K562 (cell line): ENCODE measurements at regions of chr5 and their contacts with region 1.

Region 1: GRCh38 chr5:132662925-132663770 is 5.2 kb downstream of the IL13 start:
- DNase-seq: peak; percentile 63 to 71 (median 65)
- ATAC-seq: peak; percentile 58
- H3K4me3 ChIP-seq: no peak overlapping the region
- H3K27ac ChIP-seq: peak overlapping the region; percentile 81
- H3K4me1 ChIP-seq: peaks cover 63 to 81% of the 10 kb centered on the region in 2 experiments
- H3K27me3 ChIP-seq: no peaks in the 10 kb centered on the region
- CTCF ChIP-seq: no peak
- EP300 ChIP-seq: no peak
- POLR2A ChIP-seq: 0 out of 2 replicates have a peak, but pooled peaks have one; percentile 38
- RAD21 ChIP-seq: no peak

Region 2: DNA sequence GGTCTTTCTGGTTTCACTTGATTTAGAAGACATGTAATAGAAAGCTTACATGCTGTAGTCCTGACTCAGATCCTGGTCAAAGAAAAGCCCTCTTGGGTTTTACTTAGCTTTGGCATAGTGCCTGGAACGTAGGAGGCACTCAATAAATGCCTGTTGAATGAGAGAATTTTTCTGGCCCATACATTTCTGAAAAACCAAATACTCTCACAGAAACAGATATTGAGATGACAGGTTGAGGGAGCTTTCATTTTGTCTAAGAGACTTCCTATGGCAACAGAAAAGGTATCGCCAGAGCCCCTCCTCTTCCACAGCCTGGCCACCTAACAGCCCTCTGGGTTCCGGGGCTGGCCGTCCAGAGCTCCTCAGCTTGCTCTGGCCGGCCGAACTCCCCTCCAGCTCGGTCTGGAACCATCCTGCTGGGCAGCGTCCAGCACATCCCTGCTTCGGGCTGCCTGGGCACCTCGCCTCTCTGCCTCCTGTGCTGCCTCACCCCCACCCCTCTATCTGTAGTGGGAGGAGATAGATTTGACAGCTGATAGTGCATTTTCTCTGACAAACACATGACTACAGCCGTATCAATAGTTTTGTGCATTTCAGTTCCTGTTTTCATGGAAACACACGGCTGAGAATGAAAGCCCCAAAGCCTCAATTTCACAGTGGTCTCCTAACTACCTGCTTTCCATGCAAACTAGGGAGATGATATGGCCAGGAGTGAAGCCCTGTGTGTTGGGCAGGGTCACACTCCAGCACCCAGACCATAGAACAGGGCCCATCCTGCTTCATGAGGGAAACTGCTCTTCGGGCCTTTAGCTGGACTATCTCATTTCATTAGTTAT is 11.7 kb after region 1 on chr5:
- CTCF ChIA-PET with region 1: no interaction called
- POLR2A ChIA-PET with region 1: interaction called, 12 read pairs
- in situ Hi-C with region 1: no loop called
- intact Hi-C with region 1: no loop called
- DNase-seq: no peak
- ATAC-seq: peak; percentile 48
- H3K4me3 ChIP-seq: no peak overlapping the region
- H3K27ac ChIP-seq: no peak overlapping the region
- H3K4me1 ChIP-seq: peaks cover 20 to 38% of the 10 kb centered on the region in 2 experiments; a peak in 4 of 5 replicates
- H3K27me3 ChIP-seq: no peaks in the 10 kb centered on the region
- CTCF ChIP-seq: no peak
- EP300 ChIP-seq: no peak
- POLR2A ChIP-seq: no peak
- RAD21 ChIP-seq: no peak

Region 3: DNA sequence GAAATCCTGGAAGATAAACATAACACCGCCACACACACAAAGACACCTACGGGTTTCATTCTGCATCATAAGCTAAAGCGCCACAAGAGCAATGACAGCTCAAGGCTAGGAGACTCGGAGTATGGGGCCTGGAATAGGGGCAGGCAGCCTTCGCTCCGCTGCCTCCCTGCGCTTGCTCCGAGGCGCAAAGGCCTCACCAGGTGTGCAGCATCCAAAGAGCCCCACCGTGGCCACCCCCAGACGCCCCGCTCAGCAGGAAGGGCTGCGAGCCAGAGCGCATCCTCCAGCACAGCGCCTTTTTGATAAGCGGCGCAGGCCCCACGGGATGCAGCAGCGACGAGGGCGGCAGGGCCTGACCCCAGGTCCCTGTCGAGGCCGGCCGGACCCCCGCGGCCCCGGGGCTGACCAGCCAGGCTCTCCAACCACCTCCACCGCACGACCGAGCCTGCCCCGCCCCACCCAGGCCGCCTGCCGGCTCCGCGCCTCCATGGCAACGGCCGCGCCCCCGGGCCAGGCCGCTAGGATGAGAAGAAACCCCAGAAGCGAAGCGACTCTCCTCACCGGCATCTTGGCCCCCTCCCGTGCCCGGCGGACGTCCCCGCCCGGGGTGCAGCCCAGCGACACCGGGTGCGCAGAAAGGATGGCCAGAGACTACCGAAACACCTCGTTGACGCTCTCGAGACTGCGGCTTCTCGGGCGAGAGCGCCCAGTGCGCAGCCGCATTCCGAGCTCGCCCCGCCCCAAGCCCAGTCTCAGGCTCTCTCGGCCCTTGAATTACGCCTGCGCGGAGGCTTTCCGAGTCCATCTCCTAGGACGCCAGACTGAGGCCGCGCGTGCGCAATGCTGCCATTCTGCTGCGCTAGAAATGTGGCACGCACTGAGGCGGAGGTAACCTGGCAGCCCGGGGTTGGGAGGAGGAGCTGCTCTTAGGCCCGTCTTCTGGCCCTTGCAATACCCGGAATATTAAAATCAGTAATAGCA is 74.0 kb after region 1 on chr5 and contains the start of gene KIF3A:
- CTCF ChIA-PET with region 1: no interaction called
- POLR2A ChIA-PET with region 1: no interaction called
- in situ Hi-C with region 1: no loop called
- intact Hi-C with region 1: loop called (anchors 5 kb)
- DNase-seq: peak; percentile 98 to 100 (median 99)
- ATAC-seq: peak; percentile 99
- H3K4me3 ChIP-seq: peak within 1 kb of the TSS; percentile 84
- H3K27ac ChIP-seq: no peak within 1 kb of the TSS; the same call in 2 of the 3 replicates
- H3K4me1 ChIP-seq: peaks cover 10 to 16% of the 10 kb centered on the region in 2 experiments; a peak in 4 of 5 replicates
- H3K27me3 ChIP-seq: no peaks in the 10 kb centered on the region
- CTCF ChIP-seq: no peak
- EP300 ChIP-seq: no peak
- POLR2A ChIP-seq: peak; percentile 52; the same call in 1 of the 2 replicates
- RAD21 ChIP-seq: no peak
- polyA plus RNA-seq, gene KIF3A: 1.5 TPM

Region 4: DNA sequence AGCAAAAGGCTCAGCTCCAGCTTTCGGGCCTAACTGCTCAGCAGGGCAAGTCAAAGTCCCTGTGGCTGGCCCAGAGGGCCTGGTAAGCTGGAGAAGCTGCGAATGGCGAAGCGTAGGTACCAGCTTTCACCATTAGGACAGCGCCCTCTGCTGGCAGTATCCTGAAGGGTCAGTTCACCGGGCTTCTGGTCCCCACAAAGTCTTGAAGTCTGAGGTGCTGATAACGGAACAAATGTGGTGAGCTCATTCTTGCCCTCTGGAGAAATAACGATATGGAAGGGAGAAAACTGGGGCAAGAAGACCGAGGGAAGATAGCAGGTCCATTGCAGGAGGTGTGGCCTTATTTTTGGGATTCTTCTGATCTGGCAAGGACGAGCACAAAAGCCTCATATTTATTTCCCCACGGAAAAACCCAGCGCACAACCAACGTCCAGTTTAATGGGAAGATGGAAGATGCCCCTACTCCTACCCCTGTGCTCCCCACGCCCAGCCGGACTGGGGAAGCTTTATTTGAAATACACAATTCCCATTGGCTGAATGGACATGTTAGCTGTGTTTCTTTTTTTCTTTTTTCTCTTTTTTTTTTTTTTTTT is 157.1 kb after region 1 on chr5:
- CTCF ChIA-PET with region 1: interaction called, 5 read pairs
- POLR2A ChIA-PET with region 1: no interaction called
- in situ Hi-C with region 1: no loop called
- intact Hi-C with region 1: loop called (anchors 5 kb)
- DNase-seq: peak; percentile 84 to 97 (median 88)
- ATAC-seq: peak; percentile 96
- H3K4me3 ChIP-seq: no peak overlapping the region
- H3K27ac ChIP-seq: no peak overlapping the region
- H3K4me1 ChIP-seq: peaks cover 2 to 19% of the 10 kb centered on the region in 2 experiments; a peak in 3 of 5 replicates
- H3K27me3 ChIP-seq: no peaks in the 10 kb centered on the region
- CTCF ChIP-seq: peak; percentile 90 to 98 (median 96)
- EP300 ChIP-seq: peak; percentile 11; the same call in 1 of the 2 replicates
- POLR2A ChIP-seq: no peak
- RAD21 ChIP-seq: peak; percentile 98 to 99